ENCODE measurements at regions of chr15 and their contacts with region 1.

Region 1: DNA sequence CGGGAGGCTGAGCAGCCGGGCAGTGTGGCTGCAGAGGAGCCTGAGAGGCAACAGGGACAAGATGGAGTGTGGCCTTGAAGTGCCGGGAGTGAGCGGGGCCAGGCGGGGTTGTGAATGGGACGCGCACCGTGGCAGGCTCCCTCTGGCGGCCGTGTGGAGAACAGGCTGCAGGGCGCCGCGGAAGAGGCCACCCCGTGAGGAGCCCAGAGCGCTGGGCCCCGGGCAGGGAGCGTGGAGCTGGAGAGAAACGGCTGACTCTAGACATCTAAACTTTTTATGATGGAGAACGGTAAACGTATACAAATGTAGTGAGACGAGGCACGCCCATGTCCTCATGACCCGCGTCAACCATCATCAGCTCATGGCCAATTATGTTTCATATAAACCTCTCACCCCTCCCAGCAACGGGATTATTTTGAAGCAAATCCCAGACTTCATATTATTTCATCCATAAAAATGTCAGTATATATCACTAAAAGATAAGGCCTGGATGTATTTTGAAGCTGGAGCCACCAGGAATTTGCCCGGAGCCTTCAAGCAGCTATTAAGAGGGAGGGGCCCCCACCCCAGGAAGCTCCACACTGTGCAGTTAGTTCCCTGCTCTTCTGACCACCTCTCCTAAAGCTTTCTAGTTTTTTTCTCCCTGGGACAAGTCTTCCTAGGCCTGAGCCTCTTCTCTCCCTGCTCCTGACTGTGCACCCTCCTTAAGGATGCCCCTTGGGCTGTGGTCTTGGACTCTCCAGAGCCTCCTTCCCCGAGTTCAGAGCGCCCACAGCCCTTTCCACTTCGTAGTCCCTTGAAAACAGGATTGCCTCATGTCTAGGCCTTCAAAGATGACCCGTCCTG is 149.4 kb downstream of the SMAD6 start:
- DNase-seq: peak; percentile 86 to 87
- H3K4me3 ChIP-seq: no peak overlapping the region
- H3K4me3 Mint-ChIP-seq: peak overlapping the region; percentile 47
- H3K27ac Mint-ChIP-seq: peak overlapping the region; percentile 50
- H3K4me1 ChIP-seq: peaks cover 23% of the 10 kb centered on the region
- H3K4me1 Mint-ChIP-seq: peaks cover 19% of the 10 kb centered on the region
- H3K27me3 ChIP-seq: no peaks in the 10 kb centered on the region
- H3K27me3 Mint-ChIP-seq: no peaks in the 10 kb centered on the region
- CTCF ChIP-seq: peak; percentile 85 to 93

Region 2: DNA sequence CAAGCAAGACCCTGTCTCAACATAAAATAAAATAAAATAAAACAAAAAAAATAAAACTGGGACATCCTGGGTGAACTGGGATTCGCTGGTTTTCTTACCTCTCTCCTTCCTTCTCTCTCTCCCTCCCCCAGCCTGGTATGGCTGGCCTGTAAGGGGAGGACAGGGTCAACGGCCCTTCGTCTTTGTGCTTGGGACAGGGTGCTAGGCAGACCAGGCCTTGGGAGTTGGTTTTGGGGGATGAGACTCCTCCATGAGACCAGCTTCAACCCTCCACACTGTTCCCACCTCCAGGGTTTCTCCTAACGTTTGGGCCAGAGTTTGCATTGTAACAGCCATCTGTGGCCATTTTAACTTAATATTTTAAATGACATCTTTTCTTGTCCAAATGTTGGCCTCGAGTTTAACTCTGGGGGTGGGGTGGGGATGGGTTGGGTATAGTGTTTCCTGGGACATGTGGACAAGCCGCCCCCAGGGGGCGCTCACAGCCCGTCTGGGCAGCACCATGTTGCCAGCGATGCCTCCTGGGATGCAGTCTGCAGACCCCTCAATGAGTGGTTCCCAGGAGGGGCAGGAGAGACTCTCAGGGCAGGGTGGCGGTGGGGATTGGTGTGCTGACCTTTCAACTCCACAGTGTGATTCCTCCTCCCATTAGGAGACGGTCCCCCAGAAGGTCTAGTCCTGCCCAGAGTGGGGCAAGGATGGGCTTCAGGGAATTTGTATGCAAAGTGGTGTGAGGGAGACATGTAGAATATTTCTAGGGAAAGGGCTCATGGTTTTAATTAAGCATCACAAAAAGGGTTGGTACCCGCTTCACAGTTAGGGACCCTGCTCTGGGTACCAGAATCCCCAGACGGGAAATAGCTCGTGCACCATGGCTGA is 247.9 kb before region 1 on chr15:
- CTCF ChIA-PET with region 1: interaction called, 6 read pairs
- POLR2A ChIA-PET with region 1: no interaction called
- intact Hi-C with region 1: loop called (anchors 5 kb)
- DNase-seq: peak in 1 of 2 experiments; percentile 72
- H3K4me3 ChIP-seq: no peak overlapping the region
- H3K4me3 Mint-ChIP-seq: no peak overlapping the region
- H3K27ac Mint-ChIP-seq: no peak overlapping the region
- H3K4me1 ChIP-seq: no peaks in the 10 kb centered on the region
- H3K4me1 Mint-ChIP-seq: no peaks in the 10 kb centered on the region
- H3K27me3 ChIP-seq: no peaks in the 10 kb centered on the region
- H3K27me3 Mint-ChIP-seq: no peaks in the 10 kb centered on the region
- CTCF ChIP-seq: peak; percentile 83 to 84